PC-9 (cell line): ENCODE measurements at regions of chr3 and their contacts with region 1.

Region 1: DNA sequence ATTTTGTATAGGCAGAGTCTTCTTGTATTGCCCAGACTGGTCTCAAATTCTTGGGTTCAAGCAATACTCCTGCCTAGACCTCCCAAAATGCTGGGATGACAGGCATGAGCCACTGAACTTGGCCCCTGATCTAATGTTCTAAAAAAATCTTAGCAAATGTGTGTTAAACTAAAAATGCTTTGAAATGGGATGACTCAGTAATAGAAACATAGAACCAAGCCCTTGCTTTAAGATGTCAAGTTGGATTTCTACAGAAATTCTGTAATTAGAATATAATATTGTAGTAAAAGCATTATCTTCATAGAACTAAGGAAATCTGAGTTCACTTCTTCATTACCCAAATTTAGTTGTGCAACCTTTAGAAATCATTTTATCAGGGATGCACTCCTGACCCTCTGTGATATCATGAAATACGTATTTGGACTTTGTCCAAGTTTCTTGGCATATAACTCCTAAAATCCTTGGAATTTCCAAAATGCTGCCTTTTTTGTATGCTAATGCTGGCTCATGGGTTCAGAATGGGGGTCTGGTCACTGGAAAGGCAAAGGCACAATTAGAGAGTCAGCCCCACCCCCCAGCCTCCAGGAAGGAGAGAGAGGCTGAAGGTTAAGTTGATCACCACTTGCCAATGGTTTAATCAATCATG is 217.3 kb downstream of the TP63 start:
- DNase-seq: peak in 1 of 2 experiments; percentile 10
- H3K4me3 ChIP-seq: no peak overlapping the region
- H3K27ac ChIP-seq: no peak overlapping the region
- H3K4me1 ChIP-seq: no peaks in the 10 kb centered on the region
- H3K27me3 ChIP-seq: no peaks in the 10 kb centered on the region
- CTCF ChIP-seq: no peak

Region 2: GRCh38 chr3:189537135-189537534 is 311.4 kb before region 1 on chr3:
- CTCF ChIA-PET with region 1: no interaction called
- POLR2A ChIA-PET with region 1: no interaction called
- intact Hi-C with region 1: no loop called
- DNase-seq: no peak
- H3K4me3 ChIP-seq: no peak overlapping the region
- H3K27ac ChIP-seq: no peak overlapping the region
- H3K4me1 ChIP-seq: no peaks in the 10 kb centered on the region
- H3K27me3 ChIP-seq: no peaks in the 10 kb centered on the region
- CTCF ChIP-seq: no peak

Region 3: DNA sequence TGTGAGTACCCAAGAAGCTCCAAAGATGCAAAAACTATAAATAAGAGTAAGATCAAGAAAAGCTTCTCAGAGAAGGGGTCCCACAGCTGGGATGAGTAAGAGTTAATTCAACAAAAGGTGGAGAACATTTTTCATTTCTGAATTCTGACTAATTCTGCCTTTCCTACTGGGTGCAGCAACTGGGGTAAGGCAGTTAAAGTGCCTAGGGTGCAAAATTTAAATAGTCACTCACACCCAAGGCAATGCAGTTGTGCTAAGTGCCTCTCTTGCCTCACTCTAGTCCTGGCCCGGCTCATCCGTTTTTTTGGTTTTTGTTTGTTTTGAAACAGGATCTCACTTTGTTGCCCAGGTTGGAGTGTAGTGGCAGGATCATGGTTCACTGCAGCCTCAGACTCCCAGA is 22.9 kb after region 1 on chr3:
- CTCF ChIA-PET with region 1: no interaction called
- POLR2A ChIA-PET with region 1: interaction called, 20 read pairs
- intact Hi-C with region 1: no loop called
- DNase-seq: no peak
- H3K4me3 ChIP-seq: no peak overlapping the region
- H3K27ac ChIP-seq: no peak overlapping the region
- H3K4me1 ChIP-seq: no peaks in the 10 kb centered on the region
- H3K27me3 ChIP-seq: no peaks in the 10 kb centered on the region
- CTCF ChIP-seq: no peak